Breast epithelium (tissue), 4 donors: ENCODE measurements at regions of chr6 and their contacts with region 1.

Region 1: DNA sequence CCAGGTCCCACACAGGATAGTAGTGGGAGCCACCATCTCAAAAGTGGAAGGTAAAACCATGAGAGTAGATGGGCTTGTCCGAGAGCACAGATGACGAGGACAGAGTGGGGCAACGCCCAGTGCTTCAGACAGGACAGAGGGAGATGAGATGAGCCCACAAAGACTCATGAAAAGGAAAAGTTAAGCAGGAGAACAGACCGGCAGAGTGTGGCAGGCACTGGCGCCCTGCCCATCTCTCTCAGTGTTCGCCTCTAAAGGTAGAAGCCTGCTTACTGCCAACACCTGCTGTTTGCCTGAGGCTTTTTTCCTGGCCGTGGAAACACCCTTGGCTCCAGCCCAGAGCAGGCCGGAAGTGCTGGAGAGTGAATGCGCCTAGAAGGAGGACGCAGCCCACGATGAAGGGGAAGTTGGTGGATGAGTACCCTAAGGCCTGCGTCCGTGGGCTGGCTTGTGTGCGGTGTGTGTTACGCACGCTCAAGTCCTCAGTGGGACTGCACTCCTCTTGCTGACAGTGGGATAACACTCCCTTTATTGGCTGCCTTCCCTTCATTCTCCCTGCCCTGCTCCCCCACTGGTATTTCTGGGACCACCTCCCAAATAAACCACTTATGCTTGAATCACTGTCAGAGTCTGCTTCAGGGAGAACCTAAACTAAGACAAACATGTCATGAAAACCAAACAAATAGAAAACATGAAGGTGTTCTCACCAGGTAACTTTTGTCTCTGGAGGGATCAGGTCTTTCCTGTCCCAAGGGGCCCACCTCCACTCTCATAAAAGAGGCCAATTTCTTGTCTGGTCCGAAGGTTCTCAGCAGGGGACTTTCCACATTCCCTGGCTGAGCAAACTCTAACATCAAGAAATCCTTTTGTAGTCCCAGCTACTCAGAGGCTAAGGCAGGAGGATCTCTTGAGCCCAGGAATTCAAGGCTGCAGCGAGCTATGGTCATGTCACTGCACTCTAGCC is 9.1 kb upstream of the FOXP4 start:
- DNase-seq: peak; percentile 79 to 85
- H3K4me3 ChIP-seq: peak overlapping the region in 1 of 3 donors; percentile 4
- H3K27ac ChIP-seq: peak overlapping the region; percentile 38 to 42
- H3K4me1 ChIP-seq: peaks cover 0 to 9% of the 10 kb centered on the region in 2 donors
- H3K27me3 ChIP-seq: no peaks in the 10 kb centered on the region
- CTCF ChIP-seq: no peak
- POLR2A ChIP-seq: no peak

Region 2: GRCh38 chr6:41488433-41489119 is 48.5 kb before region 1 on chr6:
- intact Hi-C with region 1: loop called (anchors 1 kb)
- DNase-seq: no peak
- H3K4me3 ChIP-seq: no peak overlapping the region
- H3K27ac ChIP-seq: no peak overlapping the region
- H3K4me1 ChIP-seq: no peaks in the 10 kb centered on the region
- H3K27me3 ChIP-seq: no peaks in the 10 kb centered on the region
- CTCF ChIP-seq: no peak
- POLR2A ChIP-seq: no peak

Region 3: DNA sequence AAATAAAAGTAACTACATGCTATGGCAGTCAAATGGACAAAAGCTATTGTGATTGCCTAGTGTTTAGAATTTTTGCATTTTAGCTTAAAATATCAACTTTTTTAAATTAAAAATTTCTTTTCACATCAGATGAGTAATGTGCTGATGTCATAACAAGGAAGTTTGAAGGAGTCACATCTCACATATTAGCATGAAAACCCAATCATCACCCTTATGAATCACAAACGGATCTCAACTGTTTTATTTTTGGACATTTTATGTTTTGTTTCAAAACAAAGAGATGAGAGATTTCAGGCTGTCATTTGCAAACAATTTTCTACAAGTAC is 968.3 kb after region 1 on chr6:
- intact Hi-C with region 1: no loop called
- DNase-seq: no peak
- H3K4me3 ChIP-seq: no peak overlapping the region
- H3K27ac ChIP-seq: no peak overlapping the region
- H3K4me1 ChIP-seq: no peaks in the 10 kb centered on the region
- H3K27me3 ChIP-seq: no peaks in the 10 kb centered on the region
- CTCF ChIP-seq: no peak
- POLR2A ChIP-seq: no peak